Naive thymus-derived CD4-positive, alpha-beta T cell (primary cell): ENCODE measurements at regions of chr9 and their contacts with region 1.

Region 1: DNA sequence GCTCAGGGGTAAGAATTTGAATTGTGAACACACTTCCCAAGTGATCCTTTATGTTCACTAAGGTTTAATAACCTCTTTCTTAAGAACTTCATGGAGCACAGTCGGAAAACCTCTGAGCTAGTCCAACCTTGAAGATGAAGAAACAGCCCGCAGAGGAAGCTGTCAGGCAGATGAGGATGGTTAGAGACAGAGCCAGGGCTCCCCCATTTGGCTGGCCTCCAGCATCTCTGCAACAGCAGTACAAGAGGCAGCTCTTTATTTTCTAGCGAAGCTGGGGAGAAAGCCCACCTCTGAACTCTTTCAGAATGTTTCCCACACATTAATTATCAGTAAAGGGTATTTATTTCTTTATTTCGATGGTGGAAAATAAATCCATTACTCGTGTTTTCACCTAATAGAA is 350.8 kb downstream of the DMRT2 start:
- DNase-seq: peak in 2 of 9 donors; percentile 4 to 7
- ATAC-seq: no peak
- H3K4me3 ChIP-seq: no peak overlapping the region
- H3K4me3 Mint-ChIP-seq: no peak overlapping the region
- H3K27ac ChIP-seq: no peak overlapping the region
- H3K27ac Mint-ChIP-seq: peak overlapping the region in 2 of 9 donors; percentile 7 to 24
- H3K4me1 ChIP-seq: no peaks in the 10 kb centered on the region
- H3K4me1 Mint-ChIP-seq: peaks cover 0 to 8% (median 0%) of the 10 kb centered on the region in 7 donors
- H3K27me3 ChIP-seq: no peaks in the 10 kb centered on the region
- H3K27me3 Mint-ChIP-seq: peaks cover 0 to 13% (median 0%) of the 10 kb centered on the region in 5 donors

Region 2: DNA sequence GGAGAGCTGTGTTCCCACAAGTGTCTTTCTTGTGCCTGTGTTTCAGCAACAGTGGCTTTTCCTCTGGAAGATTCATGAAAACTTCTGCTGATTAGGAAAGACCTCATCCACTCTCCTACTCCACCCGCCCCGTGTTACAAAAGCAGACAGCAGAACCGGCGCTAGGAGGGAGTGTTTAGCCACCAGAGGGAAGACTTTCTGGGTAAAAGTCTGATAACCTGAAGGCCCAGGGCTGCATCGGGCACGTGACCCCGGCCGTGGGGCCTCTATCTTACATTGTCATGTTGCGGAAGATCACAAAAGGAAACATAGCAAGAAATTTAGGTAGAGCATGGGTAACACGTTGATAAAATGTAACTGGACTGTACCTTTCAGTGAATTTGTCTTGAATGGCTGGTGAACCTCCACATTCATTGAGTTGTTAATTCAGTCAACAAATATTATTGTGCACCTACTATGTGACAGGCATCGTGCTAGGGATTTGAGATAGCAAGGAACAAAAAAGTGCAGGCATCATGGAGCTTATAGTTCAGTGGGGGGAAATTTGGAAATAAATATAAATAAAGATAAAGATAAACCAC is 382.8 kb before region 1 on chr9:
- CTCF ChIA-PET with region 1: no interaction called
- POLR2A ChIA-PET with region 1: no interaction called
- intact Hi-C with region 1: loop called in 1 of 2 experiments (anchors 2 kb)
- DNase-seq: peak in 4 of 9 donors; percentile 14 to 22 (median 16)
- ATAC-seq: peak; percentile 48
- H3K4me3 ChIP-seq: no peak overlapping the region
- H3K4me3 Mint-ChIP-seq: no peak overlapping the region
- H3K27ac ChIP-seq: no peak overlapping the region
- H3K27ac Mint-ChIP-seq: no peak overlapping the region
- H3K4me1 ChIP-seq: no peaks in the 10 kb centered on the region
- H3K4me1 Mint-ChIP-seq: peaks cover 0 to 5% (median 0%) of the 10 kb centered on the region in 7 donors
- H3K27me3 ChIP-seq: no peaks in the 10 kb centered on the region
- H3K27me3 Mint-ChIP-seq: peaks cover 18 to 49% (median 30%) of the 10 kb centered on the region in 5 donors

Region 3: GRCh38 chr9:1042466-1042865 is 358.5 kb before region 1 on chr9:
- CTCF ChIA-PET with region 1: no interaction called
- POLR2A ChIA-PET with region 1: no interaction called
- intact Hi-C with region 1: loop called in 1 of 2 experiments (anchors 10 kb)
- DNase-seq: peak in 1 of 9 donors; percentile 42
- ATAC-seq: peak; percentile 46
- H3K4me3 ChIP-seq: no peak overlapping the region
- H3K4me3 Mint-ChIP-seq: peak overlapping the region; percentile 1 to 67 (median 56)
- H3K27ac ChIP-seq: no peak overlapping the region
- H3K27ac Mint-ChIP-seq: no peak overlapping the region
- H3K4me1 ChIP-seq: peaks cover 4 to 8% of the 10 kb centered on the region in 2 donors
- H3K4me1 Mint-ChIP-seq: peaks cover 13 to 35% (median 20%) of the 10 kb centered on the region in 7 donors
- H3K27me3 ChIP-seq: peaks cover 3 to 32% of the 10 kb centered on the region in 2 donors
- H3K27me3 Mint-ChIP-seq: peaks cover 67 to 87% (median 84%) of the 10 kb centered on the region in 5 donors

Region 4: GRCh38 chr9:1055141-1055540 is 345.8 kb before region 1 on chr9:
- CTCF ChIA-PET with region 1: no interaction called
- POLR2A ChIA-PET with region 1: no interaction called
- intact Hi-C with region 1: no loop called
- DNase-seq: no peak
- ATAC-seq: no peak
- H3K4me3 ChIP-seq: no peak overlapping the region
- H3K4me3 Mint-ChIP-seq: no peak overlapping the region
- H3K27ac ChIP-seq: no peak overlapping the region
- H3K27ac Mint-ChIP-seq: no peak overlapping the region
- H3K4me1 ChIP-seq: peaks cover 3 to 10% of the 10 kb centered on the region in 2 donors
- H3K4me1 Mint-ChIP-seq: peaks cover 4 to 18% (median 16%) of the 10 kb centered on the region in 7 donors
- H3K27me3 ChIP-seq: peaks cover 6 to 10% of the 10 kb centered on the region in 2 donors
- H3K27me3 Mint-ChIP-seq: peaks cover 58 to 79% (median 75%) of the 10 kb centered on the region in 5 donors

Region 5: GRCh38 chr9:1414701-1415100 is 13.7 kb after region 1 on chr9:
- CTCF ChIA-PET with region 1: no interaction called
- POLR2A ChIA-PET with region 1: no interaction called
- intact Hi-C with region 1: no loop called
- DNase-seq: no peak
- ATAC-seq: no peak
- H3K4me3 ChIP-seq: no peak overlapping the region
- H3K4me3 Mint-ChIP-seq: no peak overlapping the region
- H3K27ac ChIP-seq: no peak overlapping the region
- H3K27ac Mint-ChIP-seq: no peak overlapping the region
- H3K4me1 ChIP-seq: no peaks in the 10 kb centered on the region
- H3K4me1 Mint-ChIP-seq: peaks cover 0 to 4% (median 0%) of the 10 kb centered on the region in 7 donors
- H3K27me3 ChIP-seq: no peaks in the 10 kb centered on the region
- H3K27me3 Mint-ChIP-seq: peaks cover 0 to 11% (median 6%) of the 10 kb centered on the region in 5 donors

Region 6: DNA sequence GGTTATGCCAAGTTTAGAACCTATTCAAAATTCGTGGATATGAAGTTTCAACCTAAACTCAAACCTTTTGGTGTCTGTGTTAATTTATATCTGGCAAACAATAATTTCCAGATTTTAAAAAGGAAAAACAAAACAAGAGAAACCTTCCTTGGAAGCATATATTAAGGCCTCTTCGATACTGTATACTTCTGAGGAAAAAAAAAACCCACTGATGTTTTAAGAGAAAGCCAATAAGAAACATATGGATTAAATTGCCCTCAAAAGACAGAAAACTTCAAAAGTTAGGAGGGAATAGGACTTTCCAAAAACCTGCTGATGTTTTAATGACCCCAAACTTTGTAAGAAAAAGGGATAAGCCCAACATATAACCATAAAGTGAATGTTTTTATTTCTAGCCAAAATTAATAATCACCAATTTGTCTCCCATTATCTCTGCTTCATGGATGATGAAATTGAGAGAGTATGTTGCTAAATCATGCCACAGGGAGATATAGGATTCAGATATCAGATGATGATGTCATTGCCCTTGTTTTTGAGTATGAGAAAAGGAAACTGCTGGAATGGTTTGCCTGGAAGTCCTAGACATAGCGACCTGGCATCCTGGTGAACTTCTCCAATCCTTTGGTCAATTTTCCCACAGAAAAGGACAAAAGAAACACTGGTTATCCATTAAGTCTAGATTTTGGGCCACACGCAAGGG is 73.1 kb after region 1 on chr9:
- CTCF ChIA-PET with region 1: no interaction called
- POLR2A ChIA-PET with region 1: no interaction called
- intact Hi-C with region 1: no loop called
- DNase-seq: no peak
- ATAC-seq: no peak
- H3K4me3 ChIP-seq: no peak overlapping the region
- H3K4me3 Mint-ChIP-seq: no peak overlapping the region
- H3K27ac ChIP-seq: no peak overlapping the region
- H3K27ac Mint-ChIP-seq: no peak overlapping the region
- H3K4me1 ChIP-seq: no peaks in the 10 kb centered on the region
- H3K4me1 Mint-ChIP-seq: no peaks in the 10 kb centered on the region
- H3K27me3 ChIP-seq: no peaks in the 10 kb centered on the region
- H3K27me3 Mint-ChIP-seq: peaks cover 0 to 4% (median 0%) of the 10 kb centered on the region in 5 donors